ENCODE measurements at regions of chr15 and their contacts with region 1.

Region 1: DNA sequence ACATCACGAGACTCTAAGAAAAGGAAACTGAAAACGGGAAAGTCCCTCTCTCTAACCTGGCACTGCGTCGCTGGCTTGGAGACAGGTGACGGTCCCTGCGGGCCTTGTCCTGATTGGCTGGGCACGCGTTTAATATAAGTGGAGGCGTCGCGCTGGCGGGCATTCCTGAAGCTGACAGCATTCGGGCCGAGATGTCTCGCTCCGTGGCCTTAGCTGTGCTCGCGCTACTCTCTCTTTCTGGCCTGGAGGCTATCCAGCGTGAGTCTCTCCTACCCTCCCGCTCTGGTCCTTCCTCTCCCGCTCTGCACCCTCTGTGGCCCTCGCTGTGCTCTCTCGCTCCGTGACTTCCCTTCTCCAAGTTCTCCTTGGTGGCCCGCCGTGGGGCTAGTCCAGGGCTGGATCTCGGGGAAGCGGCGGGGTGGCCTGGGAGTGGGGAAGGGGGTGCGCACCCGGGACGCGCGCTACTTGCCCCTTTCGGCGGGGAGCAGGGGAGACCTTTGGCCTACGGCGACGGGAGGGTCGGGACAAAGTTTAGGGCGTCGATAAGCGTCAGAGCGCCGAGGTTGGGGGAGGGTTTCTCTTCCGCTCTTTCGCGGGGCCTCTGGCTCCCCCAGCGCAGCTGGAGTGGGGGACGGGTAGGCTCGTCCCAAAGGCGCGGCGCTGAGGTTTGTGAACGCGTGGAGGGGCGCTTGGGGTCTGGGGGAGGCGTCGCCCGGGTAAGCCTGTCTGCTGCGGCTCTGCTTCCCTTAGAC is at the start of gene B2M:
- DNase-seq: peak; percentile 71 to 92
- ATAC-seq: peak; percentile 93 to 96
- H3K4me3 ChIP-seq: peak within 1 kb of the TSS; percentile 86
- H3K27ac ChIP-seq: peak within 1 kb of the TSS; percentile 77 to 91
- H3K4me1 ChIP-seq: peaks cover 5% of the 10 kb centered on the region; the same call in 2 of the 3 replicates
- CTCF ChIP-seq: no peak
- EP300 ChIP-seq: no peak
- POLR2A ChIP-seq: peak; percentile 99
- RAD21 ChIP-seq: no peak
- polyA plus RNA-seq, gene B2M: 823 and 934 TPM in 2 replicates

Region 2: DNA sequence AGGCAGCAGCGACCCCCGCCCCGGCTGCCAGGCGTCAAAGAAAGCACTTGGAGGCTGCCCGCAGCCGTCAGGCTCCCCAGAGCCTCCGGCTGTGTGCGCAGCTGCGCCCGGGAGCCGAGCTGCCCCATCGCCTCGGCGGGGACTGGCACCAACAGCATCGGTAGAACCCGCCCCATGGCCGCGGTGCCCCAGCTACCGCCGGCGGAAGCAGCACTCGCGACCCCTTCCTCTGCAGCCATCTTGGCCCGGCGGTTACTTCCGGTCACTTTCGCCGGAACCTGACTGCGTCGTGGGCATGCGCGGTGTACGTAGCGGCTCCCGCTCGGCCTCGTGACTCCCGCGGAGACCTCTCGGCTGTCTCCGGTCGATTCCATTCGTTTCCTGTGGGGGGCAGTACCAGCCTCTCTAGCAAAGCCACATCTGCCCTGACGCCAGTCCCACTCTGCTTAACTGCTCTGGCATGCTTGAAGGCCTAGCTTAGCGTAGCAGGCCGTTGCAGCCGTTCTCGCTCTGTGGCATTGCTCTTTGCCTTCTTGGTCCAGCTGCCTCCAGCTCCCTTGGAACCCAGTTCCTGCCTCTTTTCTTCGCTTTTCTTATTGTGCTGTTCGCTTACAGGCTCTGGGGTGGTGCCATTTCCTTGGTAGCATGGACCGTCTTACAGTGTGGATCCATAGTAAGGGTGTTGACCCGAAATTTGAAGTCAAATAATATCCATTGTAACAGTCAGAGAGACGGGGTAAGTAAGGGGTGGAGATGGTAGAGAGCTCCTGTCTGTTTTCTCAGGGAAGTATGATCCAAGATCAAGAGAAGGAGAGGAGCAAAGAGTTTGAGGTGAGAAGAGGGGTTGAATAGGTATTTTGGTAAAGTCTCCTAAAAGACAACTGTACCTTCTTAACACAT is 47.9 kb before region 1 on chr15 and contains the start of gene SPG11:
- CTCF ChIA-PET with region 1: interaction called, 9 read pairs
- POLR2A ChIA-PET with region 1: interaction called, 22 read pairs
- DNase-seq: peak; percentile 77 to 96
- ATAC-seq: peak; percentile 95
- H3K4me3 ChIP-seq: peak within 1 kb of the TSS; percentile 82
- H3K27ac ChIP-seq: peak within 1 kb of the TSS; percentile 98
- H3K4me1 ChIP-seq: peaks cover 17% of the 10 kb centered on the region; the same call in 2 of the 3 replicates
- CTCF ChIP-seq: peak; percentile 64
- EP300 ChIP-seq: no peak
- POLR2A ChIP-seq: peak; percentile 94
- RAD21 ChIP-seq: peak; percentile 81 to 83
- polyA plus RNA-seq, gene SPG11: 26.9 and 33.9 TPM in 2 replicates

Region 3: DNA sequence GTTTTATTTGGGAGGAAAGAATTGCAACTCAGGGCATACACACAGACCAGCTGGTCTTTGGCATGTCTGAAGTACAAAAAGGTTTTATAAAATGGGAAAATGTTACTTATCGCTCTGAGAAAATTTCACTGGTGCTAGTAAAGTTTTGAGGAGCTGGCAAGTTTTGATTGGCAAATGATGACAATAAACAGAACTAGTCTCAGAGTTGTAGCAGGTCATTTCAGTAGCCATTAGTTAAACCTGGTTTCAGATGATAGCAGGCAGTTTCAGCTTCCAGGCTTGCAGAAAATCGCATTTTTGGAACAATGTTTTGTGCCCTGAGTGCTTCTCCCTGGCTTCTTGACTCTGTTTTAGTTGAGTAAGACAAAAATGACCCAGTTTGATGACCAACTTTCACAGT is 10.5 kb after region 1 on chr15:
- CTCF ChIA-PET with region 1: interaction called, 15 read pairs
- POLR2A ChIA-PET with region 1: interaction called, 81 read pairs
- DNase-seq: no peak
- ATAC-seq: no peak
- H3K4me3 ChIP-seq: no peak overlapping the region
- H3K27ac ChIP-seq: no peak overlapping the region
- H3K4me1 ChIP-seq: peaks cover 11% of the 10 kb centered on the region
- CTCF ChIP-seq: no peak
- EP300 ChIP-seq: no peak
- POLR2A ChIP-seq: no peak
- RAD21 ChIP-seq: no peak

Region 4: DNA sequence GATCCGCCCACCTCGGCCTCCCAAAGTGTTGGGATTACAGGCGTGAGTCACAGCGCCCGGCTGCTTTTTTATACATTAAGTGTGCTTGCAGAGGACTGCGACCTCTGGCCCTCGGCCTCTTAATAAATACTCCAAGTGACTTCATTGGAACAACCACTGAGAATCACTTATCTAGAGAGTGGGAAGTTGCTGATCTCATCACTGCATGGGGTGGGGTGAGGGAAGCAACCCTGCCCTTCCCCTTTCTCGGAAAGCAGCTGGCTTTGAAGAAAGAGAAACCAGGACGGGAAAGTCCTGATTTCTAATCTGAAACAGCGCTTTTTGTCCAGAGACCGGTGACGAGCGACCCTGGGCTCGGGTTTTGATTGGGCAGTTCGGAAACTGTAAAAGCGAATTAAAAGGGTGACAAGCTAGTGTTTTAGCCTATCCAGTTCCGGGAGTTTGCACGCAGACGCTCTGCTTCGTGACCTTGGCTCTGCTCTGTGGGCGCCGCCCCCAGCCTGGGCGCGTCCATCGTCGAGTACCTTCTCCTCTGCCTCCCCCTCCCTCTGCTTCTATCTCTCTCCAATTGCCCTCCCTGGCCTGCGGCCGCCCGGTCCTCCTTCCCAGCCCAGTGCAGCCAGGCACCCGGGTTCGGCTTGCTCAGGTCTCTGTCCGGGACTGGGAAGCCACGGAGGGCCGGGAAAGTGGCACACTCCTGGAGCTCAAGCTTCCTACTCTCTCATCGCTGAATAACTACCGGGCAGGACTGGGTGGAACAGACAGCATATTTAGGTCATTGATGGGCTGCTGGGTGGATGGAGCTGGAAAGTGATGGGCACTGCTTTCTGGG is 17.3 kb after region 1 on chr15:
- CTCF ChIA-PET with region 1: interaction called, 44 read pairs
- POLR2A ChIA-PET with region 1: interaction called, 81 read pairs
- DNase-seq: peak; percentile 73 to 95
- ATAC-seq: peak; percentile 95 to 97
- H3K4me3 ChIP-seq: peak overlapping the region; percentile 58
- H3K27ac ChIP-seq: peak overlapping the region; percentile 83 to 93
- H3K4me1 ChIP-seq: peaks cover 33% of the 10 kb centered on the region
- CTCF ChIP-seq: no peak
- EP300 ChIP-seq: no peak
- POLR2A ChIP-seq: peak; percentile 65
- RAD21 ChIP-seq: no peak

Region 5: DNA sequence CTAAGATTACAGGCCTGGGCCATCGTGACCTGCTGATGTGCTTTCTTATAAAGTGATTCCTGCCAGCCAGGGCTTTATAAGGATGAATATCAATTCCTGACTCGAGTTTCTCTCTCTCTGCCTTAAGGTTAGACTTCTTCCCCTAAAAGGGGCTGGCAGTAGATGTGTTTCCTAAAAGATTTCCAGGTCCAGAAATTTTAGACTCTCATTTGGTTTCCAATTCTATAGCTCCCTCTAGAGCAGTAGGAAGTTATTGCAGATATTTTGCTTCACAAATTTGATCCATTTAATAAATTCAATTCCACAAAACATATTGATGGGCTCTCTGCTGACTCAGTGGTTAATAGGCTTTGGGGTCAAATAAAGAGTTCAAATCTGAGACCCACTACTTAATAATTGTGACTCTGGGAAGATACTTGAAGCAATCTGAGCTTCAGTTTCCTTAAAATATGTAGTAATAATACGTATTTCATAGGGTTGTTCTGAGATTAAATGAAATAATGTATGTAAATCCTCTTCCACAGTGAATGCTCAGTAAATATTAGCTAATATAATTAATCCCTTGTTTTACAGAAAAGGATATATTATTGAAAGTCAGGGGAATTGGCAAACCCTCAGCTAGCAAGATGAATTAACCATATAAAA is 26.9 kb after region 1 on chr15:
- CTCF ChIA-PET with region 1: interaction called, 44 read pairs
- POLR2A ChIA-PET with region 1: interaction called, 3 read pairs
- DNase-seq: peak; percentile 21 to 43
- ATAC-seq: no peak
- H3K4me3 ChIP-seq: no peak overlapping the region
- H3K27ac ChIP-seq: no peak overlapping the region
- H3K4me1 ChIP-seq: no peaks in the 10 kb centered on the region
- CTCF ChIP-seq: peak; percentile 68
- EP300 ChIP-seq: no peak
- POLR2A ChIP-seq: no peak
- RAD21 ChIP-seq: peak; percentile 76 to 79

Measured in A549 (cell line).